ENCODE measurements at regions of chr18 and their contacts with region 1.

Region 1: GRCh38 chr18:3554811-3555427 is 104.9 kb downstream of the TGIF1 start:
- DNase-seq: no peak
- H3K4me3 ChIP-seq: no peak overlapping the region
- H3K4me3 Mint-ChIP-seq: no peak overlapping the region
- H3K27ac ChIP-seq: no peak overlapping the region
- H3K27ac Mint-ChIP-seq: no peak overlapping the region
- H3K4me1 ChIP-seq: no peaks in the 10 kb centered on the region
- H3K4me1 Mint-ChIP-seq: no peaks in the 10 kb centered on the region
- H3K27me3 ChIP-seq: no peaks in the 10 kb centered on the region
- H3K27me3 Mint-ChIP-seq: peaks cover 0 to 2% of the 10 kb centered on the region in 2 donors

Region 2: GRCh38 chr18:3148930-3149535 is 405.9 kb before region 1 on chr18:
- CTCF ChIA-PET with region 1: no interaction called
- POLR2A ChIA-PET with region 1: no interaction called
- DNase-seq: no peak
- H3K4me3 ChIP-seq: no peak overlapping the region
- H3K4me3 Mint-ChIP-seq: no peak overlapping the region
- H3K27ac ChIP-seq: no peak overlapping the region
- H3K27ac Mint-ChIP-seq: no peak overlapping the region
- H3K4me1 ChIP-seq: no peaks in the 10 kb centered on the region
- H3K4me1 Mint-ChIP-seq: peaks cover 6 to 13% (median 9%) of the 10 kb centered on the region in 3 donors
- H3K27me3 ChIP-seq: no peaks in the 10 kb centered on the region
- H3K27me3 Mint-ChIP-seq: peaks cover 0 to under 1% of the 10 kb centered on the region in 2 donors

Region 3: DNA sequence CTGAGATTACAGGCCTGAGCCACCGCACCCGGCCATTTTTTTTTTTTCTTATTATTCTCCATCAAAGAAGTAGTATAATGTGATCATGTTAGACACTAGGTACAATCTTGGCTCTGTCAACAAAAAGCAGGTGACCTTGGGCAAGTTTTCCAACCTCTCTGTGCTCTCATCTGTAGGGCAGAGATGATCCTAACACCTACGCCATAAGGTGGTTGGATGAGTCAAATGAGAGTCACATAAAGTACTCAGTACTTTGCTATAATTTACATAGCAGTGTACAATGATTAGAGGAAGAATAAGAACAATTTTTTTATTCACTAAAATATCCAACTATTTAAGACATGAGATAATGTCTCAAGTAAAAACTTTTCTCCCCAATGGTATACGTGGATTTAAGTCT is 23.7 kb after region 1 on chr18:
- CTCF ChIA-PET with region 1: no interaction called
- POLR2A ChIA-PET with region 1: interaction called, 12 read pairs
- DNase-seq: no peak
- H3K4me3 ChIP-seq: no peak overlapping the region
- H3K4me3 Mint-ChIP-seq: no peak overlapping the region
- H3K27ac ChIP-seq: no peak overlapping the region
- H3K27ac Mint-ChIP-seq: no peak overlapping the region
- H3K4me1 ChIP-seq: no peaks in the 10 kb centered on the region
- H3K4me1 Mint-ChIP-seq: no peaks in the 10 kb centered on the region
- H3K27me3 ChIP-seq: no peaks in the 10 kb centered on the region
- H3K27me3 Mint-ChIP-seq: peaks cover 3 to 4% of the 10 kb centered on the region in 2 donors

Region 4: GRCh38 chr18:3623769-3624545 is 69.0 kb after region 1 on chr18:
- CTCF ChIA-PET with region 1: no interaction called
- POLR2A ChIA-PET with region 1: no interaction called
- DNase-seq: no peak
- H3K4me3 ChIP-seq: no peak overlapping the region
- H3K4me3 Mint-ChIP-seq: no peak overlapping the region
- H3K27ac ChIP-seq: peak overlapping the region; percentile 91
- H3K27ac Mint-ChIP-seq: peak overlapping the region in 2 of 8 donors; percentile 4 to 61
- H3K4me1 ChIP-seq: peaks cover 14% of the 10 kb centered on the region
- H3K4me1 Mint-ChIP-seq: peaks cover 10 to 22% (median 13%) of the 10 kb centered on the region in 3 donors
- H3K27me3 ChIP-seq: no peaks in the 10 kb centered on the region
- H3K27me3 Mint-ChIP-seq: peaks cover 0 to 1% of the 10 kb centered on the region in 2 donors

Region 5: DNA sequence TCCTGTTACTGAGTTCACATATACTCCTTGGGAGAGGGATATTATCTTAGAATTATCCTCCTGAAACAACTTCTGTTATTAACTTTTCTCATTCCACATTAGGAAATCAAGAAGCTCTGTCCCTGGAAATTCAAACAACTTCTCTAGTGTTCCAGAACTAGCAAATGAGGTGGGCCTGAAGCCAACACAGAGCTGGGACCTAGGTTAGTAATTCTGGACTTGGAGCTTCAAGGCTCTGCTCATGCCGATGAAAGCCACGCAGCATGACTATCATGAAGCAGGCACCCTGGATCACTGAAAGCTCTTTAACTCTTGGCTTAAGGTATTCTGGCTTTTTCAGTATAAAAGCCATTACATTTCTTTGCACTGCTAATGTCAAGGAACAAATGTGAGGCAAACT is 137.8 kb after region 1 on chr18:
- CTCF ChIA-PET with region 1: no interaction called
- POLR2A ChIA-PET with region 1: no interaction called
- DNase-seq: no peak
- H3K4me3 ChIP-seq: no peak overlapping the region
- H3K4me3 Mint-ChIP-seq: no peak overlapping the region
- H3K27ac ChIP-seq: no peak overlapping the region
- H3K27ac Mint-ChIP-seq: no peak overlapping the region
- H3K4me1 ChIP-seq: no peaks in the 10 kb centered on the region
- H3K4me1 Mint-ChIP-seq: no peaks in the 10 kb centered on the region
- H3K27me3 ChIP-seq: no peaks in the 10 kb centered on the region
- H3K27me3 Mint-ChIP-seq: peaks cover 5 to 7% of the 10 kb centered on the region in 2 donors